IMR-90 (cell line): ENCODE measurements at regions of chr14 and their contacts with region 1.

Region 1: DNA sequence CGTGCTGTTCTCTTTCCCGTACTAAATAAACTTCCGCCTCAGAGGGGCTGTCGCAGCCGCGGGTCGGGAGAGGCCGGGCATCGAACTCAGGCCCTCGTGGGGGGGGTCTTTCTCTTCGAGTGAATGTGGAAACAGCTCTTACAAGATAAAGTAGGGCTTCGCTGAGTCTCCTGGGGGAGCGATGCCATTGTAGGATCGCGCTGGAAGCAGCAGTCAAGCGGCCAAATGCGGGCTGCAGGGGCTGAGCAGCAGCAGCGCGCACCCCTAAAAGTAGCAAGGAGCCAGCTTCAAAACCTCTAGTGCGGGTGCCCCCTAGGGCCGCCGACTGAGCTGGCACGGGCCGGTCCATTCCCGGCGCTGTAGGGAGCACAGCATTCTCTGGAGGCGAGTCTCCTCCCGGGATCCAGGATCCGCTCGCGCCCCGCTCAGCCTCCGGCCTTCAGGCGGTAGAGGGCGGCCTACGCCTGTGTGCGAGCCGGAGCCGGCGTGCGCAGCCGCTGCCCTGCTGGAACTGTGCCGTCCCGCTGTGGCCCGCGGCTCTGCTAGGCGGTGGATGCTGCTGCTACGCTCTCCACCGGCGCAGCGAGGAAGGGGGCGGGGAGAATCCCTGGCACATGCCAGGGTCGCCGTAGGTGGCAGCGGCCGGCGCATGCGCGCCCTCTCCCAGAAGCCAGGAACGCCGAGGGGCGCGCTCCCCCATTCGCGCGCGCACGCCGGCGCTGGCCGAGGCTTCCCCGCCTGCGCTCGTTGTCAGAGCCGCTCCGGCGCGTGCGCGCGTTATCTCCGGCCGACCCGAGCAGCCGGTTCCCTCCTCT is at the start of gene FUT8:
- DNase-seq: peak; percentile 94
- ATAC-seq: peak; percentile 80
- H3K4me3 ChIP-seq: peak within 1 kb of the TSS; percentile 95
- H3K27ac ChIP-seq: peak within 1 kb of the TSS; percentile 86
- H3K4me1 ChIP-seq: no peaks in the 10 kb centered on the region
- H3K27me3 ChIP-seq: no peaks in the 10 kb centered on the region
- CTCF ChIP-seq: peak; percentile 84
- POLR2A ChIP-seq: peak; percentile 52; the same call in 1 of the 2 replicates
- RAD21 ChIP-seq: peak; percentile 75
- total RNA-seq, gene FUT8: 60.0 and 72.9 TPM in 2 replicates

Region 2: DNA sequence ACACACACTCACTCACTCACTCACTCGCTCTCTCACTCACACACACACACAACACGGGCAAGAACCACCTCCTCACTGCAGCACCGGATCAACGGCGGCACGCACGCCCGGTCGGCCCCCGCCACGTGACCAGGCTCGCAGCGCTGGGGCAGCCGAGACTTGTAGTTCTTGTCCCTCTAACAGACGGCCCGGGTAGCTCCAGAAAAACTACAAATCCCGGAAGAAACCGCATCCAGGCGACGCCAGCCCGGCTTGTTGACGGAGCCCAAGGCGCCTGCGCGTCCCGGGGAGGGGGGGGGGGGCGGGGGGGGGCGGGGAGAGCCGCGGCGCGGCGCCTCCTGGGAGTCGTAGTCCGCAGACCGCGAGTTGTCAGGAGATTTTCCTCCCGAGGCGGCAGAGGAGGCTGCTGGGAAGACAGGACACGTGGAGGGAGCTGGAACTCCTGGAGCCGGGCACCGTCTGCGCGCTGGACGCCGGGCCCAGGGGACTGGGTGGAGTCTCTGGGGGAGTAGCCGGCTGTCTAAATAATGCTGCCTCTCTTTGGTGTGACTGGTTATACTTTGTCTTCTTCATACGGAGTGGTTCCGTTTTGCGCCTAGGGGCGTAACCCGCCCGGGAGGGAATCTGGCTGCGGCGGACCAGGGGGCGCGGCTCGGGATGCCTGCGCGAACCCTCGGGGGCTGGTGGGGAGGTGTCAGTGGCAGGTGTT is 309.6 kb before region 1 on chr14 and contains the start of gene MAX:
- CTCF ChIA-PET with region 1: no interaction called
- POLR2A ChIA-PET with region 1: no interaction called
- dilution Hi-C with region 1: no loop called
- in situ Hi-C with region 1: no loop called
- intact Hi-C with region 1: loop called (anchors 2 kb)
- DNase-seq: peak; percentile 98
- ATAC-seq: peak; percentile 89
- H3K4me3 ChIP-seq: peak within 1 kb of the TSS; percentile 84
- H3K27ac ChIP-seq: peak within 1 kb of the TSS; percentile 78
- H3K4me1 ChIP-seq: no peaks in the 10 kb centered on the region
- H3K27me3 ChIP-seq: no peaks in the 10 kb centered on the region
- CTCF ChIP-seq: no peak
- POLR2A ChIP-seq: peak; percentile 76; the same call in 1 of the 2 replicates
- RAD21 ChIP-seq: no peak
- total RNA-seq, gene MAX: 35.3 and 45.2 TPM in 2 replicates

Region 3: GRCh38 chr14:65222440-65222858 is 189.8 kb before region 1 on chr14:
- CTCF ChIA-PET with region 1: interaction called, 6 read pairs
- POLR2A ChIA-PET with region 1: interaction called, 7 read pairs
- dilution Hi-C with region 1: no loop called
- in situ Hi-C with region 1: no loop called
- intact Hi-C with region 1: loop called (anchors 1 kb)
- DNase-seq: peak; percentile 66
- ATAC-seq: peak; percentile 93
- H3K4me3 ChIP-seq: no peak overlapping the region
- H3K27ac ChIP-seq: no peak overlapping the region
- H3K4me1 ChIP-seq: 0 out of 2 replicates have a peak, but pooled peaks cover 4% of the 10 kb centered on the region
- H3K27me3 ChIP-seq: no peaks in the 10 kb centered on the region
- CTCF ChIP-seq: peak; percentile 78
- POLR2A ChIP-seq: no peak
- RAD21 ChIP-seq: peak; percentile 78

Region 4: GRCh38 chr14:65333943-65334687 is 78.1 kb before region 1 on chr14:
- CTCF ChIA-PET with region 1: no interaction called
- POLR2A ChIA-PET with region 1: no interaction called
- dilution Hi-C with region 1: no loop called
- in situ Hi-C with region 1: no loop called
- intact Hi-C with region 1: loop called (anchors 5 kb)
- DNase-seq: peak; percentile 86
- ATAC-seq: peak; percentile 81
- H3K4me3 ChIP-seq: no peak overlapping the region
- H3K27ac ChIP-seq: peak overlapping the region; percentile 88
- H3K4me1 ChIP-seq: peaks cover 22% of the 10 kb centered on the region
- H3K27me3 ChIP-seq: no peaks in the 10 kb centered on the region
- CTCF ChIP-seq: no peak
- POLR2A ChIP-seq: no peak
- RAD21 ChIP-seq: no peak

Region 5: GRCh38 chr14:65824285-65824977 is 412.2 kb after region 1 on chr14:
- CTCF ChIA-PET with region 1: interaction called, 67 read pairs
- POLR2A ChIA-PET with region 1: interaction called, 13 read pairs
- dilution Hi-C with region 1: no loop called
- in situ Hi-C with region 1: no loop called
- intact Hi-C with region 1: loop called (anchors 1 kb)
- DNase-seq: peak; percentile 70
- ATAC-seq: peak; percentile 99
- H3K4me3 ChIP-seq: no peak overlapping the region
- H3K27ac ChIP-seq: no peak overlapping the region
- H3K4me1 ChIP-seq: no peaks in the 10 kb centered on the region
- H3K27me3 ChIP-seq: peaks cover 48% of the 10 kb centered on the region
- CTCF ChIP-seq: peak; percentile 86
- POLR2A ChIP-seq: no peak
- RAD21 ChIP-seq: peak; percentile 82

Region 6: DNA sequence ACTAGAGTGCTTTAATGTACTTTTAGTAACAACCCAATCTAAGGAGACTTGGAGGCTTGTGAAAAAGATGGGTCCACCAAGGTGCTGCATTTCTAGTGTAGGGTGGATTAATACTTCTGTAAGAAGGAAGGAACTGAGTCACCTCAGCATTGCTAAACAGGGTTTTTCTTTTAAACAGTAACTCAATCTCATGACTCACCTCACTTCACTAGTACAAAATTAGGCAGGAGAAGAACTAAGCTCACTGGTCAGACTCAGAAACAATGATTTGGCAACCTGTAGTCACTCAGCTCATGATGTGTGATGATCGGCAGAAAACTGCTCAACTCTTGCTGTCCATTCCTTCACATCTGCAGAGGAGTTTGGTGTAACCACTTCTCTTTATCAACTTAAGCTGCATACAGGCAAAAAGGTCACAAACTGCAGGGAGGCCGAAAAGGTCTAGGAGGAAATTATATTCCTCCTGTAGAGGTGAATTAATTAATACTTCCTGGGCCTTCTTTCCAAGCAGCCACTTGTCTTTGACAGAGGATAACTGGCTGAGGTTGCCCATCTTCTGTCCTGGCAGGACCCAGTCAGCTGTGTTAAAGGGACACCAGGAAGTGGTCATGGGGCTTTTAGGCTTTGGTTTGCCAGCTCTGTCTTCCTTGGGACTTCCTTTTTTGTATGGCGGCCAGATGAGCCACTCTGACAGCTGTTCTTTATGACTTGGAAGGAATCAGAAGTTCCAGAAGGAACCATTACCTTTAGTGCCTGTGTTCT is 467.2 kb after region 1 on chr14:
- CTCF ChIA-PET with region 1: no interaction called
- POLR2A ChIA-PET with region 1: no interaction called
- dilution Hi-C with region 1: no loop called
- in situ Hi-C with region 1: no loop called
- intact Hi-C with region 1: no loop called
- DNase-seq: peak; percentile 60
- ATAC-seq: no peak; the same call in 1 of the 2 replicates
- H3K4me3 ChIP-seq: no peak overlapping the region
- H3K27ac ChIP-seq: no peak overlapping the region
- H3K4me1 ChIP-seq: no peaks in the 10 kb centered on the region
- H3K27me3 ChIP-seq: no peaks in the 10 kb centered on the region
- CTCF ChIP-seq: no peak
- POLR2A ChIP-seq: no peak
- RAD21 ChIP-seq: no peak